B cell (primary cell): ENCODE measurements at regions of chr12 and their contacts with region 1.

Region 1: DNA sequence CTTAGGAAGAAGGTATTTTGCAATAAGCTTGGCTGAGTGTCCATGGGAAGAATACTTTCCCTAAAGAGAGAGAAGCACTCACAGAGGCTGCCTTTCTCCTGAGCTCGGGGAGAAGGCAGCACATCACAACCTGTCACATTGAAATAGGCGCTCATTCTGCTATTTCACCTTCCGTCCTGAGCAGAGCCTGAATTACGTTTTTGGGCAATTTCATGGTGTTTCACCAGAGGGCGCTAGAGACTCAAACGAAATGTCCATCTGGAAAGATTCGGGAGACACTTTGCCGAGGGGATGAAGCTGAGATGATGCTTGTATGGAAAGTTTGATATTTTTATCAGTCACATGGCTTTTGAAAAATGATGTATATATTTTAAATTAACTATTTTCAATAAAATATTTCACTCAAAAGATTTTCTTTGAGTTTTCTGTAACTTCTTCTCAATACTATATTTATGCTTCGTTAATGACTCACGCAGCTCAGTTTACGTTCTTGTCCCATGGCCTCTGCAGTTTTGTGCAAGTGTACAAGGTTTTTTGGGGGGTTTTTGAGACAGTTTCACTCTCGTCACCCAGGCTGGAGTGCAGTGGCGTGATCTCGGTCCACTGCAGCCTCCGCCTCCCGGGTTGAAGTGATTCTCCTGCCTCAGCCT is 17.4 kb upstream of the B4GALNT3 start:
- DNase-seq: peak; percentile 41
- ATAC-seq: no peak
- H3K4me3 ChIP-seq: no peak overlapping the region
- H3K4me3 Mint-ChIP-seq: no peak overlapping the region
- H3K27ac ChIP-seq: no peak overlapping the region
- H3K27ac Mint-ChIP-seq: no peak overlapping the region
- H3K4me1 ChIP-seq: no peaks in the 10 kb centered on the region
- H3K4me1 Mint-ChIP-seq: no peaks in the 10 kb centered on the region
- H3K27me3 ChIP-seq: no peaks in the 10 kb centered on the region
- H3K27me3 Mint-ChIP-seq: no peaks in the 10 kb centered on the region
- CTCF ChIP-seq: peak; percentile 77

Region 2: DNA sequence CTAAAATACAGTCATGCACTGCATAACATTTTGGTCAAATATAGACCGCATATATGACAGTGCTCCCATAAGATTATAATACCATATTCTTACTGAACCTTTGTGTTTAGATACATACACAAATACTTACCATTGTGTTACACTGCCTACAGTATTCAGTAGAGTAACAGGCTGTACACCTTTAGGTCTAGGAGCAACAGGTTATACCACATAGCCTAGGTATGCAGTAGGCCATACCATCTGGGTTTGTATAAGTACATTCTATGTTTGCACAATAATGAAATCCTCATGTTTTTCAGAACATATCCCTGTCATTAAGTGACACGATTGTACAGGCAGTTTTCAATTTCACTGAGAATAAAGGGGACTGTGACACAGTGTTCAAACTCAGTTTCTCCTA is 75.5 kb before region 1 on chr12:
- CTCF ChIA-PET with region 1: no interaction called
- POLR2A ChIA-PET with region 1: no interaction called
- intact Hi-C with region 1: no loop called
- DNase-seq: no peak
- ATAC-seq: no peak
- H3K4me3 ChIP-seq: no peak overlapping the region
- H3K4me3 Mint-ChIP-seq: no peak overlapping the region
- H3K27ac ChIP-seq: no peak overlapping the region
- H3K27ac Mint-ChIP-seq: no peak overlapping the region
- H3K4me1 ChIP-seq: no peaks in the 10 kb centered on the region
- H3K4me1 Mint-ChIP-seq: no peaks in the 10 kb centered on the region
- H3K27me3 ChIP-seq: no peaks in the 10 kb centered on the region
- H3K27me3 Mint-ChIP-seq: no peaks in the 10 kb centered on the region
- CTCF ChIP-seq: no peak

Region 3: GRCh38 chr12:389139-390096 is 52.9 kb before region 1 on chr12 and contains the start of gene KDM5A:
- CTCF ChIA-PET with region 1: no interaction called
- POLR2A ChIA-PET with region 1: no interaction called
- intact Hi-C with region 1: no loop called
- DNase-seq: peak; percentile 98
- ATAC-seq: peak; percentile 93
- H3K4me3 ChIP-seq: peak within 1 kb of the TSS; percentile 81 to 99 (median 98)
- H3K4me3 Mint-ChIP-seq: peak within 1 kb of the TSS; percentile 98
- H3K27ac ChIP-seq: peak within 1 kb of the TSS; percentile 90 to 93
- H3K27ac Mint-ChIP-seq: peak within 1 kb of the TSS; percentile 99
- H3K4me1 ChIP-seq: peaks cover 27 to 28% of the 10 kb centered on the region in 2 donors
- H3K4me1 Mint-ChIP-seq: peaks cover 40% of the 10 kb centered on the region
- H3K27me3 ChIP-seq: no peaks in the 10 kb centered on the region
- H3K27me3 Mint-ChIP-seq: no peaks in the 10 kb centered on the region
- CTCF ChIP-seq: no peak
- total RNA-seq, gene KDM5A: 171 and 175 TPM in 2 replicates

Region 4: DNA sequence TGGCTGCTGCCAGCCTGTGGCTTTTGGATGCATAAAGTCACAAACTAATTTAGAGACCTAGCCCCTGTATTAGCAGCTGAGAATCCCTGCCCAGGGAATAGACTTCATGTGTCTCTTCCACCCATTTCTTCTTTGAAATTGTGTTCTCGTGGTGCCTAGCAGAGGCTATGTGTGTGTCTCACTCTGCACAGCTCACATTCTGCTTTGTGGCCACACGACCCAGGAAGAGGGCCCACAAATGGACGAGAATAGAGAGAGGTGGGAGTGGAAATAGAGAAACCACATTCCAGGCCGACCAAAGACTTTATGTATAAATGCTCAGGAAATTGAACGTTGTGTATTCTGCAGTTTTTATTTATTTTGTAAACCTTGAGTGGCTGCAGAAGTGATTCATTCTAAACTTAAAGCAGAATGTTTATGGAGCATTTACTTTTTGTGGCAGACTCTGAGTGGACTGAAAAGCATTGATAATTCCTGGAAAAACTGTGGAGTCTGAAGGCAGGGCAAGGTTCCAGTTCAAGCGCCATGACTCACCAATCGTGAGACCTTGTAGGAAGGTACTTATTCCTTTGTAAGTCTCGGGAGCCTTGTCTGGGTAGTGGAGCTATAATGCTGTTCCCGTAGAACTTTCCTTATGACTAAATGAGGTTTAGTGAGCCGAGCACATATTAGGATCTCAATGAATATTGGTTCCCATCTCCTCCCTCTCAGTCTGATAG is 26.5 kb after region 1 on chr12:
- CTCF ChIA-PET with region 1: no interaction called
- POLR2A ChIA-PET with region 1: no interaction called
- intact Hi-C with region 1: no loop called
- DNase-seq: no peak
- ATAC-seq: no peak
- H3K4me3 ChIP-seq: no peak overlapping the region
- H3K4me3 Mint-ChIP-seq: no peak overlapping the region
- H3K27ac ChIP-seq: no peak overlapping the region
- H3K27ac Mint-ChIP-seq: no peak overlapping the region
- H3K4me1 ChIP-seq: no peaks in the 10 kb centered on the region
- H3K4me1 Mint-ChIP-seq: peaks cover 2% of the 10 kb centered on the region
- H3K27me3 ChIP-seq: peaks cover 0 to 5% (median 2%) of the 10 kb centered on the region in 4 experiments
- H3K27me3 Mint-ChIP-seq: peaks cover 31% of the 10 kb centered on the region
- CTCF ChIP-seq: no peak

Region 5: DNA sequence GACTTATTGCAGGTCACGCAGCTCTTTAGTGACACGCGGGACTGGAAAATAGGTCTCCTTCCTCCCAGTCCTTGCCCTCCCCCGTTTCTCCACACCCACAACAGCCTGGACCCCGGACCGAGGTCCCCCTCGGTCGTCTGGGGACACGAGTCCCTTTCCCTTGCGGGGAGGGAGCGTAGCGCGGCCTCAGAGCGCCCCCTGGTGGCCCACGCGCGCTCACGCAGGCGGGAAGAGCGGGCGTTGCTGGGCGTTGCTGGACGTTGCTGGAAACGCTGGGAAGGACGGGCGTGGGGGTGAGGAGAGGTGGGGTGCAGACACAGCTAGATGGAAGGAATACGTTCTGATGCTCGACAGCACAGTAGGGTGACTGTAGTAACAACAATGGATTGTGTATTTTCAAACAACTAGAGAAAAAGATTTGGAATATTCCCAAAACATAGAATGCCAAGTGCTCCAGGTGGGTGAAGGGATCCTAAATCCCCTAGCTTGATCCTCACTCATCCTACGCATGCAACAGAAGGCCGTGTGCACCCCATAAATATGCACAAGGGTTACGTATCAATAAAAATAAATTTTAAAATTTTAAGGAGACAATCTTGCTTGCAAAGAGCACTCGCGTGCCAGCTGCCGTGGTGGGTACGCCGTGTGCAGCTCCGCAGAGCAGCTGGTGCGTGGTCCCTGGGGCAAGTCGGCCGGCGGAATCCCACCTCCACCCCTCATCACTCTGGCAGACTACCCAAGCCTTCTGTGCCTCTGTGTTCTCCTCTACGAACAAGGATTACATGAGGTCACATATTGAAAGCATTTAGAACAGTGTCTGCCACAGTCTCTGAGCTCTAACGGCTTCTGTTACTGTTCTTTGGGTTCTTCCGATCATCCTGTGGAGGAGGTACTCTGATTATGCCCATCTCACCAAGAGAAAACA is 104.8 kb after region 1 on chr12:
- CTCF ChIA-PET with region 1: interaction called, 5 read pairs
- POLR2A ChIA-PET with region 1: no interaction called
- intact Hi-C with region 1: loop called (anchors 1 kb)
- DNase-seq: peak; percentile 68
- ATAC-seq: peak; percentile 62
- H3K4me3 ChIP-seq: no peak overlapping the region
- H3K4me3 Mint-ChIP-seq: no peak overlapping the region
- H3K27ac ChIP-seq: no peak overlapping the region
- H3K27ac Mint-ChIP-seq: no peak overlapping the region
- H3K4me1 ChIP-seq: peaks cover 8 to 10% of the 10 kb centered on the region in 2 donors
- H3K4me1 Mint-ChIP-seq: peaks cover 3% of the 10 kb centered on the region
- H3K27me3 ChIP-seq: peaks cover 0 to 34% (median 3%) of the 10 kb centered on the region in 4 experiments
- H3K27me3 Mint-ChIP-seq: peaks cover 38% of the 10 kb centered on the region
- CTCF ChIP-seq: peak; percentile 95